Endothelial cell of umbilical vein (primary cell): ENCODE measurements at regions of chrX and their contacts with region 1.

Region 1: DNA sequence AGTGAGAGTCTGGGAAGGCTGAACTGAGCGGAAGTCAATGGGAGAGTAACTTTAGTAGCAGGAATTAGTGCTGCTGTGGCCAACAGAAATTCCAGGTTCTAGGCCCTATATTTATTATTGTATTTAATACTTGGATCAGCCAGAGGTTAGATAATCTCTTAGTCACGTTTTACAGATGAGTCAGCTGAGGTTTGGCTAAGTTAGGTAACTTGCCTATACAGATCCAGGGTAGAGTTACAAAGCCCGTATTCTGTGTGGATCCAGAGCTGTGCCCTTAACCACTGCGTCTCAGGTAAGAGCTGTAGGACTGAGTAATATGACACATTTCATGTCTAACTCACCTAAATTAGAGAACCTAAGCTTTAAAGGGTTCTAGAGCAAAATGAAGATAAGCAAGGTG is 20.5 kb downstream of the PSMD10 start:
- DNase-seq: peak; percentile 29
- H3K4me3 ChIP-seq: no peak overlapping the region
- H3K27ac ChIP-seq: peak overlapping the region; percentile 17
- H3K4me1 ChIP-seq: peaks cover 19% of the 10 kb centered on the region
- H3K27me3 ChIP-seq: no peaks in the 10 kb centered on the region
- CTCF ChIP-seq: no peak
- POLR2A ChIP-seq: no peak

Region 2: GRCh38 chrX:107654872-107655761 is 415.8 kb before region 1 on chrX:
- CTCF ChIA-PET with region 1: no interaction called
- POLR2A ChIA-PET with region 1: no interaction called
- dilution Hi-C with region 1: no loop called
- intact Hi-C with region 1: loop called (anchors 5 kb)
- DNase-seq: peak; percentile 49
- H3K4me3 ChIP-seq: no peak overlapping the region
- H3K27ac ChIP-seq: peak overlapping the region; percentile 45
- H3K4me1 ChIP-seq: peaks cover 6% of the 10 kb centered on the region
- H3K27me3 ChIP-seq: no peaks in the 10 kb centered on the region
- CTCF ChIP-seq: peak; percentile 65 to 74
- POLR2A ChIP-seq: no peak

Region 3: DNA sequence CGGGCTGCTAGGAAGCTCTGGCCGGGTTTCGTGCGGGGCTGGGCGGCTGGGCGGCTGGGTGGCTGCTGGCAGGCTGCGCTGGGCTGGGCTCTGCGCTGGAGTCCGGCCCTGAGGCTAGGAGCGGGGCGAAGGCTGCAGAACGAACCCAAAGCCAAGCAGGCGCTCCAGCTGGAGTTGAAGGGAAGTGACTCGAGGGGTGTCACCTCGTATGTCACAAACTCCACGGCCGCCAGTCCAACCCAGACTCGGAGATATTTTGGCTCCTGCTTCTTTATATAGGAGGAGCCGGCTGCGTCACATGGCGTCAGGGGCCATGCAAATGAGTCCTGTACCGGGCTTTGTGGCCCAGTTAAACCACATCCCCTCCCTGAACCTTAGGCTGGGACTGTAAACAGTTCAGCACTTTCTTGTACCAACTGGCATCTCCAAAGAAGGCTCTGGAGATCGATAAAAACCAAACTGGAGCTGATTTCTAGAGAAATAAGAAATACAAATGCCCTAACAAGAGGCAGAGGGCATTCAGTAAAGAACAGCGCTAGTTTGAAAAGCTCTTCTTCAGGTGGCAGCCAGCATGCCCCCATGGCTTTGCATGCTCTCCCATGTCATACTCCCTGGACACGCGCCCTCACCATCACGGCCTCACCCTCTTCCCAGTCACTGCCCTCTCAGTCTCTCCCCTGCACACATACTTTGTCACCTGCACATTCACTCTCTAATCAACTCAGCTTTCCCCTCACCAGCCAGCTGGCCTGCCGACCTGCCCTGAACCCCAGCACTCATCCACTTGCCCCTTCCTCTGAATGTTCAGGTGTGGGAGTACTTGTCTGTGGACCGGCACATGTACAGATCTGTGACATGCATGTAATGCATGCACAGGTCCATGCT is 353.8 kb before region 1 on chrX:
- CTCF ChIA-PET with region 1: interaction called, 3 read pairs
- POLR2A ChIA-PET with region 1: no interaction called
- dilution Hi-C with region 1: no loop called
- intact Hi-C with region 1: loop called (anchors 1 kb)
- DNase-seq: peak; percentile 84
- H3K4me3 ChIP-seq: peak overlapping the region; percentile 49 to 84 (median 58)
- H3K27ac ChIP-seq: peak overlapping the region; percentile 77
- H3K4me1 ChIP-seq: peaks cover 11% of the 10 kb centered on the region
- H3K27me3 ChIP-seq: no peaks in the 10 kb centered on the region
- CTCF ChIP-seq: no peak
- POLR2A ChIP-seq: peak; percentile 93

Region 4: DNA sequence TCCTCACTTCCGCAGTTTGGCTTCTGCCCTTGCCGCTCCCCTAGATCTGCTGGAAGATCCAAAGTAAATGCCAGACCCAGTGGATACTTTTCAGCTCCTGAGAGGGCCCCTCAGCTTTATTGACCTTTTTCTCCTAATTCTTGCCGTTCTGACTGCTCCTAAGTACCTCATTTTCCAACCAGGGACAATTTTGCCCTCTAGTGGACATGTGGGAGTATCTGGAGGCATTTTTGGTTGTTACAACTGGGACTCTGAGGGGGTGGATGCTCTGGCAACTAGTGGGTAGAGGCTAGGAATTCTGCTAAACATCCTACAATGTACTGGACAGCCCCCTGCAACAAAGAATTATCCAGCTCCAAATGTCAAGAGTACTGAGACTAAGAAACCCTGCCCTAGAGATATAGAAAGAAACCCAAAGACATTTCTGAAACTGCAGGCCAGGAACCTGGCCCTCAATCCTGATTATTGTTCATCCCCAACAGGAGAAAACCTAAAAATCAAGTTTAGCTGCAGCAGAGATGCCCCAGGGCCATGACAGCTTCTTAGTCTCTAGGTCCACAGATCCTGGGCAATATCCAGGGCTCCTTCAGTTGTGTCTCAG is 92.1 kb before region 1 on chrX:
- CTCF ChIA-PET with region 1: no interaction called
- POLR2A ChIA-PET with region 1: no interaction called
- dilution Hi-C with region 1: no loop called
- intact Hi-C with region 1: loop called (anchors 1 kb)
- DNase-seq: peak; percentile 23
- H3K4me3 ChIP-seq: no peak overlapping the region
- H3K27ac ChIP-seq: no peak overlapping the region
- H3K4me1 ChIP-seq: no peaks in the 10 kb centered on the region
- H3K27me3 ChIP-seq: no peaks in the 10 kb centered on the region
- CTCF ChIP-seq: peak; percentile 26 to 40
- POLR2A ChIP-seq: no peak

Region 5: GRCh38 chrX:108020631-108021030 is 50.3 kb before region 1 on chrX:
- CTCF ChIA-PET with region 1: interaction called, 34 read pairs
- POLR2A ChIA-PET with region 1: no interaction called
- dilution Hi-C with region 1: no loop called
- intact Hi-C with region 1: loop called (anchors 1 kb)
- DNase-seq: peak; percentile 55
- H3K4me3 ChIP-seq: no peak overlapping the region
- H3K27ac ChIP-seq: no peak overlapping the region
- H3K4me1 ChIP-seq: peaks cover 19% of the 10 kb centered on the region
- H3K27me3 ChIP-seq: no peaks in the 10 kb centered on the region
- CTCF ChIP-seq: peak; percentile 26 to 44
- POLR2A ChIP-seq: no peak

Region 6: GRCh38 chrX:108059801-108060200 is 11.1 kb before region 1 on chrX:
- CTCF ChIA-PET with region 1: interaction called, 12 read pairs
- POLR2A ChIA-PET with region 1: no interaction called
- dilution Hi-C with region 1: no loop called
- intact Hi-C with region 1: no loop called
- DNase-seq: no peak
- H3K4me3 ChIP-seq: no peak overlapping the region
- H3K27ac ChIP-seq: no peak overlapping the region
- H3K4me1 ChIP-seq: no peaks in the 10 kb centered on the region
- H3K27me3 ChIP-seq: no peaks in the 10 kb centered on the region
- CTCF ChIP-seq: no peak
- POLR2A ChIP-seq: no peak